Dendritic cell treated with granulocyte-macrophage colony-stimulating factor and Interleukin-4, amounts not matched to agents 40 ng/mL and 50 ng/mL, for 4 days (primary cell): ENCODE measurements at regions of chr9 and their contacts with region 1.

Region 1: GRCh38 chr9:98536542-98537173 is 172.1 kb downstream of the GABBR2 start:
- H3K4me3 Mint-ChIP-seq: no peak overlapping the region
- H3K27ac Mint-ChIP-seq: no peak overlapping the region
- H3K4me1 Mint-ChIP-seq: no peaks in the 10 kb centered on the region
- H3K27me3 Mint-ChIP-seq: peaks cover 14% of the 10 kb centered on the region

Region 2: GRCh38 chr9:98315551-98316060 is 221.1 kb before region 1 on chr9:
- intact Hi-C with region 1: loop called (anchors 5 kb)
- H3K4me3 Mint-ChIP-seq: no peak overlapping the region
- H3K27ac Mint-ChIP-seq: no peak overlapping the region
- H3K4me1 Mint-ChIP-seq: peaks cover 18% of the 10 kb centered on the region
- H3K27me3 Mint-ChIP-seq: peaks cover 3% of the 10 kb centered on the region

Region 3: DNA sequence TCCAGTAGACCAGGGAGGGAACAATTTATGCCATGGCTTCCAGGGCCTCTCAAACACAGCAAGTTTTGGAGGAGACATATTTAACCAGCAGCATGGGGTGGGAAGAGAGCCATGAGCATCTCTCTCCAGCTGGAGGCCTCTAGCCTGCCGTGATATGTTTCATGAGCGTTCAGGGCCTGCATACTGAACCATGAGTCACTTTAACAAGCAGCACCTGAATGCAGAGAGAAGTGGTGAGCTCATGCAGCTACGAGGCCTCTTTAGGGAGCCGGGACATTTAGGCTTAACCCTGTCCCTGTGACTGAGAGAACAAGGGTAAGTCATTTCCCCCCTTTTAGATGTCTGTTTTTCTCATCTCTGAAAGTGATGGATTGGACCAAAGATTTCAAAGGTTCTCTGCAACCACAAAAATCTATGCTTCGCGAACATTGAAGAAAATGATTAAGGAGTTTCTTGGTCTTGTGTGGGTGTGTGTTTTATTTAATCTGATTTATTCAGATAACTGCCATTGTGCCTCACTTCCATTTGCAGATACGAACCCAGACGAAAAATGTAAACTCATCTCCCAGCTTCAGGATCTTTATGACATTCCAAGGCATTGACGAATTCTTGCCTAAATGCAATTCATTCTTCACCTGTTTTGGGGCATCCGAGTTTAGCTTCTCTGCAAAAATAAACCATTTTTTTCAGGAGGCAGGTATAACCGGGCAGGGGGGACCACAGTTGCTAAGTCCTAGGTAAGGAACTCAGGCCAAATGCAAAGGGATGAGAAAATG is 15.0 kb after region 1 on chr9:
- intact Hi-C with region 1: no loop called
- H3K4me3 Mint-ChIP-seq: no peak overlapping the region
- H3K27ac Mint-ChIP-seq: no peak overlapping the region
- H3K4me1 Mint-ChIP-seq: no peaks in the 10 kb centered on the region
- H3K27me3 Mint-ChIP-seq: no peaks in the 10 kb centered on the region

Region 4: GRCh38 chr9:98707166-98708102 is 170.8 kb after region 1 on chr9:
- intact Hi-C with region 1: loop called (anchors 2 kb)
- H3K4me3 Mint-ChIP-seq: no peak overlapping the region
- H3K27ac Mint-ChIP-seq: no peak overlapping the region
- H3K4me1 Mint-ChIP-seq: no peaks in the 10 kb centered on the region
- H3K27me3 Mint-ChIP-seq: peaks cover 80% of the 10 kb centered on the region

Region 5: DNA sequence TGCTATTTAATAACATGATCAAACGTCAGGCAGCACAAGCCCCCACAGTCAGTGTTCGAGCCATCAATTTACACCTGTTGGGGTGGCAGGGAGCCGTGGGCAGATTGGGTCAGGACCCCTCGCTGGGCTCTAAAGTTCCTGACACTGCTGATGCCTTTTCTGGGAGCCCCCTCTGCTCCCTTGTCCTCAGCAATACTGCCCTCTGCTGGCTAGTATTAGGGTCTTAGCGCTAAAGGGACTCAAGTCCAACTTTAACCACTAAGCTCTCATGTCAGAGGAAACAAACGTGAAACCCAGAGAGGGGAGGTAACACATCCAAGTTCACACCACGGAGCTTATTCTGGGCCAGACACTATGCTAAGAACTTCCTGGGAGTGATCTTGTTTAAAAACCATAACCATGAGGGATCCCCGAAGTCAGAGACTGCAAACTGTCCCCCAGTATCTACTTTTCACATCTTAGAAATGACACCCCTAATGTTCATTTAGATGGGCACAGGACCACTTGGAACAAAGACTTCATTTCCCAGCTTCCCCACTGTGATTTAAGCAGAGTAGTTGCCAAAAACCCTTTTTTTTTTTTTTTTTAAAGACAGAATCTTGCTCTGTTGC is 239.3 kb after region 1 on chr9:
- intact Hi-C with region 1: loop called (anchors 1 kb)
- H3K4me3 Mint-ChIP-seq: no peak overlapping the region
- H3K27ac Mint-ChIP-seq: no peak overlapping the region
- H3K4me1 Mint-ChIP-seq: no peaks in the 10 kb centered on the region
- H3K27me3 Mint-ChIP-seq: no peaks in the 10 kb centered on the region

Region 6: GRCh38 chr9:98791147-98792095 is 254.8 kb after region 1 on chr9:
- intact Hi-C with region 1: loop called (anchors 5 kb)
- H3K4me3 Mint-ChIP-seq: no peak overlapping the region
- H3K27ac Mint-ChIP-seq: no peak overlapping the region
- H3K4me1 Mint-ChIP-seq: peaks cover 14% of the 10 kb centered on the region
- H3K27me3 Mint-ChIP-seq: peaks cover 21% of the 10 kb centered on the region